ENCODE measurements at regions of chr6 and their contacts with region 1.

Region 1: GRCh38 chr6:35522660-35523658 is 10.3 kb upstream of the TULP1 start:
- DNase-seq: peak; percentile 50
- ATAC-seq: peak; percentile 100
- H3K4me3 ChIP-seq: no peak overlapping the region
- H3K27ac ChIP-seq: no peak overlapping the region
- H3K4me1 ChIP-seq: no peaks in the 10 kb centered on the region
- H3K27me3 ChIP-seq: peaks cover 15% of the 10 kb centered on the region
- CTCF ChIP-seq: peak; percentile 92
- POLR2A ChIP-seq: no peak
- RAD21 ChIP-seq: peak; percentile 93

Region 2: DNA sequence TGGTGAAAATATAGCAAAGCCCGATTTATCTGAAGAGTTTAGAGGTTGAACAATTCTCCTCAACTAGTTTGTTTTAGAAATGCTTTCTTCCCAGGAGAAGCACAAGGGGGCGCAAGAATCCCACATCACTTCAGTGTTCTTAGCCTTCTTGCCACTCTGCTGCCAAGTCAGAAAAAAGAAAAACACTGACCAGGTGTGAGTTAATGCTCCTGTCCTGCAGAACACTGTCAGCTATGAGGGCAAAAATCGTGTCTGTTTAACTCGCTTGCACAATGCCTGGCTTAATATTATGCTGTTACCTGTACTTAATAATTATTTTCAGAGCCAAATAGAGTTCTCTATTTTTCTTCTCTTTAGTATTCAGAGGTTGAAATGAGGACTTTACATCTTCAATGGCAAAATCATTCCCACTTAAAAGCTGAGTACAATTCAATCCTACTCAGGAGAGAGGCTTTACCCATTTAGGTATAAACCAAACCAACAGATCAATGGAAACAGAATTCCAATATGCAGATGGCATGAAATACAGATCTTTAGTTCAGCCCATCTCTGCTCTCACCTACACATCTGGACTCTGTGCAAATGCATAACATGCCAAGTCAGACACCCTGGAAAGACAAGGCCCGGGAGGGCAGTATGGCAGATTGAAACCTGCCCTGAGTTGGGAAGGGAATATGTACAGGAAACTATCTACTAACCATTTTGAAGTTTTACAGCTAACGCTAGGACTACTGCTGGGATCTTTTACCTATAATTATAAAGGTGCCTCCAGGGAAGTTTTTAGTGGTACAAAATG is 61.1 kb after region 1 on chr6:
- CTCF ChIA-PET with region 1: no interaction called
- POLR2A ChIA-PET with region 1: no interaction called
- dilution Hi-C with region 1: no loop called
- in situ Hi-C with region 1: no loop called
- intact Hi-C with region 1: loop called (anchors 5 kb)
- DNase-seq: peak; percentile 77
- ATAC-seq: peak; percentile 72
- H3K4me3 ChIP-seq: no peak overlapping the region
- H3K27ac ChIP-seq: no peak overlapping the region
- H3K4me1 ChIP-seq: no peaks in the 10 kb centered on the region
- H3K27me3 ChIP-seq: no peaks in the 10 kb centered on the region
- CTCF ChIP-seq: peak; percentile 95
- POLR2A ChIP-seq: no peak
- RAD21 ChIP-seq: peak; percentile 95

Region 3: DNA sequence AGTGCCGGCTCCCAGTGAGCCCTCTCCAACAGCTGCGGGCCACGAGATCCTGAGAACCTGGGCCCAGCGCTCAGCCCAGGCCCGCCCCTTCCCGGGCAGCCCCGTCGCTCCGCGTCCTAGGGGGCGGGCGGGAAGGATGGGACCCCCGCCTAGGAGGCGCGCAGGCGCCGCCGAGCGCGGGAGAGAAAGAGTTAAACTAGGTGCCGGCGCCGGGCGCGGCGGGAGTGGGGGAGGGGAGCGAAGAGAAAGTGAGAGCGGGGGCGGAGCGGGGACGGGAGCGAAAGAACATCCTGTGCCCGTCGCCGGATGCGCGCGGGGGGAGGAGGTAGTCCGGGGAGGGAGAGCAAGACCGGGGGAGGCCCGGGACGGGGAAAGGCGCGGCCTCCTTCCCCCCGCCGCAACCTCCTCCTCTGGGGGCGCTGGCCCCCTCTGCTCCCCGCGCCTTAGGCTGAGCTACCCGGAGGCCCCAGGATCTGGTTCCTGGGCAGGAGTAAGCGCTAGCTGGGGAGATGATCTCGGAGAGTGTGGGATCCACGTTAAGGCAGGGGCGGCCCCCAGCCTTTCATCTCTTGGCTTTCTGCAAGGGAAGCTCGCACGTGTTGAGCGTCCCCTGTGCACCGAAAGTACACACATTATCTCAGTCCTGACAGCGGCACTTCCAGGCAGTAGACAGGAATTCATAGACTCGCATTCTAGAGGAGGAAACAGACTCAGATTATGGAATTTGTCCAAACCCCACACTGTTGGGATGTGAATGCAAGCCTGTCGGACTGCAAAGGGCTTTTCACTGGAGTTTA is 209.0 kb after region 1 on chr6:
- CTCF ChIA-PET with region 1: interaction called, 6 read pairs
- POLR2A ChIA-PET with region 1: no interaction called
- dilution Hi-C with region 1: no loop called
- in situ Hi-C with region 1: loop called (anchors 5 kb)
- intact Hi-C with region 1: loop called (anchors 1 kb)
- DNase-seq: peak; percentile 83
- ATAC-seq: peak; percentile 68
- H3K4me3 ChIP-seq: peak overlapping the region; percentile 70
- H3K27ac ChIP-seq: peak overlapping the region; percentile 88
- H3K4me1 ChIP-seq: peaks cover 8% of the 10 kb centered on the region
- H3K27me3 ChIP-seq: no peaks in the 10 kb centered on the region
- CTCF ChIP-seq: no peak
- POLR2A ChIP-seq: no peak
- RAD21 ChIP-seq: no peak

Region 4: GRCh38 chr6:35754448-35755277 is 231.7 kb after region 1 on chr6:
- CTCF ChIA-PET with region 1: no interaction called
- POLR2A ChIA-PET with region 1: no interaction called
- dilution Hi-C with region 1: no loop called
- in situ Hi-C with region 1: no loop called
- intact Hi-C with region 1: no loop called
- DNase-seq: peak; percentile 45
- ATAC-seq: peak; percentile 57
- H3K4me3 ChIP-seq: no peak overlapping the region
- H3K27ac ChIP-seq: no peak overlapping the region
- H3K4me1 ChIP-seq: no peaks in the 10 kb centered on the region
- H3K27me3 ChIP-seq: peaks cover 29% of the 10 kb centered on the region
- CTCF ChIP-seq: no peak
- POLR2A ChIP-seq: no peak
- RAD21 ChIP-seq: no peak

Region 5: DNA sequence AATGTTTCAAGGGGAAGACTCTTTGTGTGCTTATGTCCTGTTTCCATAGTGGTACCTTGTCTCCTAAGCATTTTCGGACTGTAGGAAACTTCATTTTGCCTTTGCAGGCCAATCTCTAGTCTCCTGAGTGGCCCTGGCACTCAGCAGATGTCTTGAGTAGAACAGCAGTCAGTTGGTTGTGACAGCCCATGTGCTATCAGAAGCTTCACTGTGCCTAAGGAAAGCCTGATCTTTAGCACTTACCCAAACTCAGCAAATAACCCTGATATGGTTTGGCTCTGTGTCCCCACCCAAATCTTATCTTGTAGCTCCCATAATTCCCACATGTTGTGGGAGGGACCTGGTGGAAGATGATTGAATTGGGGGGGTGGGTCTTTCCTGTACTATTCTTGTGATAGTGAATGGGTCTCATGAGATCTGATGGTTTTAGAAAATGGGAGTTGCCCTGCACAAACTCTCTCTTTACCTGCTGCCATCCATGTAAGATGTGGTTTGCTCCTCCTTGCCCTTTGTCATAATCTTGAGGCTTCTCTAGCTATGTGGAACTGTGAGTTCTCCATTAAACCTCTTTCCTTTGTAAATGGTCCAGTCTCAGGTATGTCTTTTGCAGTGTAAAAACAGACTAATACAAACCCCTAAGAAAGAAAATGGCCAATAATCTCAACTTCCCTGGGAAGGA is 413.9 kb after region 1 on chr6:
- CTCF ChIA-PET with region 1: no interaction called
- POLR2A ChIA-PET with region 1: interaction called, 16 read pairs
- dilution Hi-C with region 1: no loop called
- in situ Hi-C with region 1: no loop called
- intact Hi-C with region 1: no loop called
- DNase-seq: no peak
- ATAC-seq: no peak
- H3K4me3 ChIP-seq: no peak overlapping the region
- H3K27ac ChIP-seq: no peak overlapping the region
- H3K4me1 ChIP-seq: no peaks in the 10 kb centered on the region
- H3K27me3 ChIP-seq: peaks cover 4% of the 10 kb centered on the region
- CTCF ChIP-seq: no peak
- POLR2A ChIP-seq: no peak
- RAD21 ChIP-seq: no peak

Measured in IMR-90 (cell line).